IMR-90 (cell line): ENCODE measurements at regions of chr11 and their contacts with region 1.

Region 1: GRCh38 chr11:88016392-88017170 is 158.7 kb downstream of the RAB38 start:
- DNase-seq: peak; percentile 84
- ATAC-seq: peak; percentile 96
- H3K4me3 ChIP-seq: no peak overlapping the region
- H3K27ac ChIP-seq: no peak overlapping the region
- H3K4me1 ChIP-seq: no peaks in the 10 kb centered on the region
- H3K27me3 ChIP-seq: no peaks in the 10 kb centered on the region
- CTCF ChIP-seq: peak; percentile 89
- POLR2A ChIP-seq: no peak
- RAD21 ChIP-seq: peak; percentile 89

Region 2: DNA sequence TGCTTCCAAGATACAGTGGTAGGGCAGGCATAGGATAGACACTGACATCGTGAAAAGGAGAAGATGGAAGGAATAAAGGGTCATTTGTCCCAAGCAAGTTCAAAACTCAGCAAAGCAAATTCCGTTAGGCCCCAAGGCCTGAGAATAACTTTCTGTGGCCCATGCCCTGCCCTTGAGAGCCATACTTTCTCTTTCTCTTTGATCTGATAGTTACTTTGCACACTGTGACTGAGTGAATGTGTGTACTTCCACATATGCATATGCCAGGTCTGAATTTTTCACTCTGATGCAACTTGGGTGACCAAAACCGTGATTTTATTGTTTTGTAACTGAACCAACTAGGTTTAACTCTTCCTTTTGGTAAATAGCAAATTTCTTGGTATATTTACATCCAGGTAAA is 212.8 kb before region 1 on chr11:
- CTCF ChIA-PET with region 1: no interaction called
- POLR2A ChIA-PET with region 1: no interaction called
- dilution Hi-C with region 1: no loop called
- in situ Hi-C with region 1: no loop called
- intact Hi-C with region 1: no loop called
- DNase-seq: no peak
- ATAC-seq: no peak
- H3K4me3 ChIP-seq: no peak overlapping the region
- H3K27ac ChIP-seq: no peak overlapping the region
- H3K4me1 ChIP-seq: no peaks in the 10 kb centered on the region
- H3K27me3 ChIP-seq: no peaks in the 10 kb centered on the region
- CTCF ChIP-seq: no peak
- POLR2A ChIP-seq: no peak
- RAD21 ChIP-seq: no peak

Region 3: GRCh38 chr11:88117281-88117858 is 100.8 kb after region 1 on chr11:
- CTCF ChIA-PET with region 1: no interaction called
- POLR2A ChIA-PET with region 1: no interaction called
- dilution Hi-C with region 1: no loop called
- in situ Hi-C with region 1: no loop called
- intact Hi-C with region 1: no loop called
- DNase-seq: no peak
- ATAC-seq: no peak
- H3K4me3 ChIP-seq: no peak overlapping the region
- H3K27ac ChIP-seq: no peak overlapping the region
- H3K4me1 ChIP-seq: no peaks in the 10 kb centered on the region
- H3K27me3 ChIP-seq: no peaks in the 10 kb centered on the region
- CTCF ChIP-seq: no peak
- POLR2A ChIP-seq: no peak
- RAD21 ChIP-seq: no peak

Region 4: GRCh38 chr11:88174709-88175568 is 158.4 kb after region 1 on chr11 and contains the start of gene RAB38:
- CTCF ChIA-PET with region 1: no interaction called
- POLR2A ChIA-PET with region 1: interaction called, 18 read pairs
- dilution Hi-C with region 1: no loop called
- in situ Hi-C with region 1: no loop called
- intact Hi-C with region 1: no loop called
- DNase-seq: peak; percentile 86
- ATAC-seq: peak; percentile 85
- H3K4me3 ChIP-seq: peak within 1 kb of the TSS; percentile 46
- H3K27ac ChIP-seq: no peak within 1 kb of the TSS
- H3K4me1 ChIP-seq: peaks cover 2% of the 10 kb centered on the region; the same call in 1 of the 2 replicates
- H3K27me3 ChIP-seq: no peaks in the 10 kb centered on the region; the same call in none of the 2 replicates
- CTCF ChIP-seq: no peak
- POLR2A ChIP-seq: peak; percentile 66; the same call in 1 of the 2 replicates
- RAD21 ChIP-seq: no peak
- total RNA-seq, gene RAB38: 6.4 and 6.5 TPM in 2 replicates

Region 5: DNA sequence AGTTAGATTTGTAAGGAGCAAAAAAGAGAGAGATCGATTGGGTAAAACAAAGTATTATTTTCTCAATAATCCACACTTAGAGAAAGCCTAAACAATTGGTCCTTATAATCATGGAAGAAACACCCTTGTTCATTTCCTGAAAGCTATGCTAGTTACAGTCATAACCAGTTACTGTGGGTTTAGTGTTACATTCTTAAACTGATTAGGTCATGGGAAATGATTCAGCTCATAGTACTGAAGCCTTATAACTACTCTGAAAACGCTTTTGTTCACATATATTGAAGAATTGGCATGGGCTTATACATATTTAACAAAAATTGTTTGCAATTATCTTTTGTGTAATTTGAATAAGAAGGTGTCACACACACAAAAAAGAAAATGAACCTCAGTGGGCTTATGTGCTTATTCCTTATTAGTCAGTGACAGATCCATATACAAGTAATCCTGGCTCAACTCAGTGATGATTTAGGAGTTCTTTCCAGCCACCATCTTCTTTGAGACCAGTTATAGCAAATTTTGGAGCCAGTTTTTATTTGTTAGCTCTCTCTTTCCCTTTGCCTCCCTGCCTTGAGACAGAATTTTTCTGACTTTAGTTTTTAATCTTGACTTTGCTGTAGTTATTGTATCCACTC is 519.5 kb after region 1 on chr11:
- CTCF ChIA-PET with region 1: interaction called, 14 read pairs
- POLR2A ChIA-PET with region 1: no interaction called
- dilution Hi-C with region 1: loop called (anchors 25 kb)
- in situ Hi-C with region 1: loop called (anchors 25 kb)
- intact Hi-C with region 1: no loop called
- DNase-seq: peak; percentile 92
- ATAC-seq: peak; percentile 97
- H3K4me3 ChIP-seq: no peak overlapping the region
- H3K27ac ChIP-seq: peak overlapping the region; percentile 97
- H3K4me1 ChIP-seq: peaks cover 8% of the 10 kb centered on the region
- H3K27me3 ChIP-seq: no peaks in the 10 kb centered on the region
- CTCF ChIP-seq: no peak
- POLR2A ChIP-seq: no peak
- RAD21 ChIP-seq: no peak

Region 6: DNA sequence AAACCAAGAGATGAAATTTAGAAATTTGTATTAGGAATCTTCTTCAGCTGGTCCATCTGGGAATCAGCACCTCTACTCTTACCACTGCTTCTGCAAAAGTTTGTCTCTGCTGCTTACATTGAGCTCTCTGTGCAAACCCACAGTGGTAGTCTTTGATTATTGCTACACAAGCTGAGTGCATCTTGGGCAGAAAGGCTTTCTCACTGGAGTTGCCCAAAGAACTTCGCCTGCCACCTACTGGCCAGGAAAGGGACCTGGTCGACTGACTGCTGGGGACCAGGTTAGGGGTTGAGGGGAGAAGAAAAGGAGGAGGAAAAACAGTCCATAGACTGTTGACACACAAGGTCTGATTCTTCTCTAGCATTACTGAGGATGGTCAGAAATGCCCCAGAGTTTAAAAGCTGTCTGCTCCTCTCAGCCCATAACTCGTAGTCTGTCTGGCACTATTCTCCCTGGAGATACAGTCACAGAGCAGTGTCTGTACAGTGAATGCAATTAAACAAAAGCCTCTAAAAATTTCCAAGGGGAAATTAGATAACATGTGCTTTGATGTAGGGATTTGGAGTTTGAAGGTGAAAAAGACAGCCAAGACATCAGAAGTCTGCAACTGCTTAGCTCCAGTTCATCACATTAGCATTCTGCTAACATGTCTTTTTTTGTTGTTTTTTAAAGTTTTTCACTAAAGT is 535.9 kb after region 1 on chr11:
- CTCF ChIA-PET with region 1: interaction called, 12 read pairs
- POLR2A ChIA-PET with region 1: no interaction called
- dilution Hi-C with region 1: loop called (anchors 25 kb)
- in situ Hi-C with region 1: loop called (anchors 25 kb)
- intact Hi-C with region 1: loop called (anchors 1 kb)
- DNase-seq: peak; percentile 55
- ATAC-seq: peak; percentile 66
- H3K4me3 ChIP-seq: no peak overlapping the region
- H3K27ac ChIP-seq: no peak overlapping the region
- H3K4me1 ChIP-seq: peaks cover 4% of the 10 kb centered on the region
- H3K27me3 ChIP-seq: no peaks in the 10 kb centered on the region
- CTCF ChIP-seq: peak; percentile 61
- POLR2A ChIP-seq: no peak
- RAD21 ChIP-seq: peak; percentile 71

Region 7: DNA sequence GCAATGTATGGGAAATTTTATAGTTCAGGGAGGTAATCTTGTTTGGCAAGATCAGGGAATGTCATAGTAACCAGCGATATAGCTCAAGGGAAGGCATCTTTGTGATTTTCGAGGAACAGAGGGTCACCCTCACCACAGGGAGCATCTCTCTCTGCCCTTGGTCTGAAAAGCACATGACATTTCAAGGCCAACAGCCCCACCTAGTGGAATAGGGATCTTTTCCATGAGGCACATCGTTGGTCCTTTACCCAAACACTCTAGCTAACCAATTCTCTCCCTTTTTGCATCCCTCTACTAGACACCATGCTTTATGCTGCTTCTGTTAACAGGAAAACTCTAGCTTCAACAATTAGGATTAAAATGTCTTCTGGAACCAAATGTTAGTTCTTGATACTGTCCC is 870.2 kb after region 1 on chr11:
- CTCF ChIA-PET with region 1: no interaction called
- POLR2A ChIA-PET with region 1: no interaction called
- dilution Hi-C with region 1: no loop called
- in situ Hi-C with region 1: loop called (anchors 25 kb)
- intact Hi-C with region 1: no loop called
- DNase-seq: peak; percentile 46
- ATAC-seq: peak; percentile 62; the same call in 1 of the 2 replicates
- H3K4me3 ChIP-seq: no peak overlapping the region
- H3K27ac ChIP-seq: no peak overlapping the region
- H3K4me1 ChIP-seq: no peaks in the 10 kb centered on the region
- H3K27me3 ChIP-seq: no peaks in the 10 kb centered on the region
- CTCF ChIP-seq: peak; percentile 57
- POLR2A ChIP-seq: no peak
- RAD21 ChIP-seq: peak; percentile 68